H1 (cell line): ENCODE measurements at regions of chr17 and their contacts with region 1.

Region 1: DNA sequence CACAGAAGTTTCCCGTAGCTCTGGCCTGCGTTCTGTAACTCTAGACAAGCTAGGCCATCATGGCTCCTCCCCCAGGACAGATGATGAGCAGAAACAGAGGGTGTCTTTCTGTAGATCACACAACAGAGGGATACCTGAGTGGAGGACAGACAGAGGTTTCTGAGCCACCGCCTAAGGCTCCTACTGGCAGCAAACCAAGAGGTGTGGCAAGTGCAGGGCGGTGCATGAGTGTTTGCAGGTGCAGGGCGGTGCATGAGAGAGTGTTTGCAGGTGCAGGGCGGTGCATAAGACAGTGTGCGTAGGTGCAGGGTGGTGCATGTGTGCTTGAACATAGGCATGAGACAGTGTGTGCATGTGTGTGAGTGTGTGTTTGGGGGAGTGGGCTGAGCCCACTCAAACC is 53.2 kb upstream of the CBX4 start:
- DNase-seq: no peak
- H3K4me3 ChIP-seq: no peak overlapping the region
- H3K27ac ChIP-seq: no peak overlapping the region
- H3K4me1 ChIP-seq: no peaks in the 10 kb centered on the region
- H3K27me3 ChIP-seq: peaks cover 0 to 3% (median 0%) of the 10 kb centered on the region in 4 experiments; a peak in 1 of 7 replicates
- CTCF ChIP-seq: no peak
- EP300 ChIP-seq: no peak
- POLR2A ChIP-seq: no peak
- RAD21 ChIP-seq: no peak

Region 2: GRCh38 chr17:79844869-79845600 is 47.4 kb before region 1 on chr17:
- CTCF ChIA-PET with region 1: interaction called, 13 read pairs
- POLR2A ChIA-PET with region 1: interaction called, 4 read pairs
- DNase-seq: peak in 1 of 2 experiments; percentile 88
- H3K4me3 ChIP-seq: peak overlapping the region in 3 of 4 experiments; percentile 20 to 60 (median 23); a peak in 4 of 8 replicates
- H3K27ac ChIP-seq: no peak overlapping the region
- H3K4me1 ChIP-seq: peaks cover 0 to 23% (median 15%) of the 10 kb centered on the region in 4 experiments; a peak in 5 of 7 replicates
- H3K27me3 ChIP-seq: peaks cover 57 to 64% (median 63%) of the 10 kb centered on the region in 4 experiments
- CTCF ChIP-seq: peak; percentile 67 to 88 (median 84)
- EP300 ChIP-seq: 0 out of 3 replicates have a peak, but pooled peaks of 1 of the 2 experiments have one; percentile 15
- POLR2A ChIP-seq: no peak
- RAD21 ChIP-seq: peak; percentile 55 to 77